SK-N-SH (cell line): ENCODE measurements at regions of chr17 and their contacts with region 1.

Region 1: DNA sequence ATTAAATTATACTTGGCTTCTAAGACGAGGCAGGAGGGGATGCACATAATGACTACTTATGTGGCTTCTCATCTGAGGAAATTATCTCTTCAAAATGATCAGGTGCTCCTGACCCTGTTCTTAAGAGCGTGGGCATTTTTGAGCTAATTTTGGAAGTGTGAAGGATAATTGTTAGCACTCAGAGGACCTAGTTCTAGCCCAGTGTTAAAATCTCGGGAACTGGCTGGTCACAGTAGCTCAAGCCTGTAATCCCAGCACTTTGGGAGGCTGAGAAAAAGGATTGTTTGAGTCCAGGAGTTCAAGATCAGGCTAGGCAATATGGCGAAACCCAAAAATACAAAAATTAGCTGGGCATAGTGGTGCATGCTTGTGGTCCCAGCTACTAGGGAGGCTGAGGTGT is 103.0 kb upstream of the DHX40 start:
- DNase-seq: no peak
- H3K4me3 ChIP-seq: no peak overlapping the region
- H3K27ac ChIP-seq: no peak overlapping the region
- H3K4me1 ChIP-seq: no peaks in the 10 kb centered on the region
- H3K27me3 ChIP-seq: no peaks in the 10 kb centered on the region
- CTCF ChIP-seq: no peak
- EP300 ChIP-seq: no peak
- RAD21 ChIP-seq: no peak

Region 2: DNA sequence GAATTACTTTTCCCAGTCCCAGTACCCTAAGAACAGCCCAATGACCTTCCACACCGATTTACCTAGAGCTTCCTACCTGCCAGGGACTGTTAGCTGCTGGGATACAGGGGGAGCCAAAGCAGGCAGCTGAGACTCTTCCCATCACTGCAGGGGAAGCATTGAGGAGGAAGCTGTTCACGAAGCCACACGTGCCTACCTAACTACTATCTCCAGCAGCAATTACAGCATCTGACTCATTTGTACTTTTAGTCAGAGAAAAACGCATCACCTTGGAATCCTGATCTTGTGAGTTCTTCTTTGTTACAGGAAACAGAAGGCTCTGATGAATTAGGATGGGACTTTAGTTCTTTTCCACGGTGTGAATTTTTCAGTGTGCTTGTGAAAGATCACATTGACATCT is 10.7 kb before region 1 on chr17:
- CTCF ChIA-PET with region 1: interaction called, 12 read pairs
- POLR2A ChIA-PET with region 1: no interaction called
- DNase-seq: no peak
- H3K4me3 ChIP-seq: no peak overlapping the region
- H3K27ac ChIP-seq: no peak overlapping the region
- H3K4me1 ChIP-seq: peaks cover 0 to 10% of the 10 kb centered on the region in 2 experiments; a peak in 1 of 4 replicates
- H3K27me3 ChIP-seq: no peaks in the 10 kb centered on the region
- CTCF ChIP-seq: 0 out of 2 replicates have a peak, but pooled peaks have one; percentile 13
- EP300 ChIP-seq: no peak
- RAD21 ChIP-seq: no peak